GM10248 (cell line): ENCODE measurements at regions of chr12 and their contacts with region 1.

Region 1: DNA sequence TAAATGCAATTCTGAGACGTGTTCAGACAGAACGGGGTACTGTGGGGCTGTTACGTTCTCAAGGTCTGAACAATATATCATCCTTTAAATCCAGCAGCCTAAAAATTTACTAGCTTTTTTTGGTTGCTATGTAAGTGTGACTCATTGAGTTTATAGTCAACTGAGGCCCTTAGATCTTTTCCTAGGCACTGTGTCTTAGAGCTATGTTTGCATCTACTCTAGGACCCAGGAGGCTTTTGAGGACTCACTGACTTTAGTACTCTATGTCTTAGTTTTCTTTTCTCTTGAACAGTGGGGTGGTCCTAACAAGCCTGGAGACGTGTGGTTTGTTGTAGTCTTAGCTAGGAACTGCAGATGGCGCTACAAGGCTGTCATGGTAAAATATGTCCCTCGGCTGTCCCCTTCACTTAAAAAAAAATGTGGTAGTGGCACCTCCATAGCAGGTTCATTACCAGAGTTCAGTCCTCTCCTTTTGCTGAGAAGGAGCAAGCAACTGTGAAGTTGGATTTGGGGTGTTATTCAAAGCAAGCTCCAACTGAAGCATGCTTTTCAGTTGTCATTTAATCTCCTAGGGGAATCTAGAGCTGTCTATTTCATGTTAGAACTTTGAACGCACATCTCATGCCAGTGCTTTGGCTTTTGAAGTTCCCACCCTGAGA is 8.7 kb upstream of the SPATS2 start:
- DNase-seq: peak; percentile 70
- CTCF ChIP-seq: peak; percentile 69

Region 2: DNA sequence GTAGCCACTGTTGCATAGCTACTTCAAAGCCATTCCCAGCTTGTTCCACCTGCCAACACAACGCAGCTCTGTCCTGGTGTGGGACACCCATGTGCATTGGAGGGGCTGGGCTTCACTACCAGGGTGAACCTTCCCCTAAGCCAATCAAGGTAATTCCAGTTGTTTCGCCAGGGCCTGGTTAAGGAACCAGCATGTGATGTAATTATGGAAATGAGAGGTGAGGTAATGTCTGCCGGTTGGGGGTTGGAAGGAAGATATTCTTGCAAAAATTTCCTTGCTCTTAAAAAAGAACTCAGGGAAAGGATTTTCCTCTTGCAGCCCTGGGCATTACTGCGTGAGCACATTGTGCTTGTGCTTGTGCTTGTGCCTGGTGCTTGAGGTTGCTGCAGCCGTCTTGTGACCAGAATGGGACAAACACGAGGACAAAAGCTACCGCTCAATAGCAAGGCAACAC is 78.9 kb before region 1 on chr12:
- CTCF ChIA-PET with region 1: interaction called, 239 read pairs
- POLR2A ChIA-PET with region 1: no interaction called
- DNase-seq: no peak
- CTCF ChIP-seq: no peak

Region 3: DNA sequence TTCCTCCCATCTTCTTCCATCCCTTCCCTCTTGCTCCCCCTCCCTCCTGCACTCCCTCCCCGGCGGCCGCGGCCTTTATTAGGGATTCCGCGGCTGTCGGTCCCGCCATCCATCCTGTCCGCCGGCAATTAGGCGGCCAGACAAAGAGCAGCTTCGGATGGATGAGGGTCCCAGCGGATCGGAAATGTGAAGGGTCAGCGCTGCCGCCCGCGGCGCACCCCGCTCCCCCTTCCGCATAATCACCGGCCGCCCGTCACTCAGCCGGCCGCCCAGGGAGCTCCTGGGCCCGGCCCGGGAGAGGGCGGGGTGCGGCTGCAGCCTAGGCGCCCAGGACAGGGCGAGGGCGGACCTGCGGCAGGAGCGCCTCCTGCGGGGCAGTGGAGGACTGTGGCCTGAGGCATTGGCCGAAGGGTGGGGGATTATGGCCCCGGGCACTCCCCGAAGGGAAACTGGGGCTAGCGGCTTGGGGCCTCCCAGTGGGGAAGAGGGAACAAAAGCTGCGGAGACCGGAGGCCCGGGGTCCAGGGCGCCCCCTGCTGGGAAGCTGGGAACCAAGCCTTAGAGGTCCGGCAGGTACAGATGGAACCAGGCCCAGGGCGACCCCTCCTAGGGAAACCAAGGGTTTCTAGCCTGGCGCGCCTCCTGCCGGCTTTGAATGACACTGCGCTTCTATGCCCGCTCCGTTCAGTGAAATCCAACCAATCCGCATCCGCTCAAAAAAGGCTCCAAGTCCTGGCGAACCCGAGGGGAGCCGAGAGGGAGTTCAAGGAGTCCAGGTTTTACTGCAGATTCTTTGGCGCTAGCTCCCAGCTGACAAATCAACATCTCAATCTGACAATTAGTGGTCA is 16.3 kb before region 1 on chr12:
- CTCF ChIA-PET with region 1: interaction called, 129 read pairs
- POLR2A ChIA-PET with region 1: no interaction called
- DNase-seq: peak; percentile 87
- CTCF ChIP-seq: peak; percentile 81

Region 4: DNA sequence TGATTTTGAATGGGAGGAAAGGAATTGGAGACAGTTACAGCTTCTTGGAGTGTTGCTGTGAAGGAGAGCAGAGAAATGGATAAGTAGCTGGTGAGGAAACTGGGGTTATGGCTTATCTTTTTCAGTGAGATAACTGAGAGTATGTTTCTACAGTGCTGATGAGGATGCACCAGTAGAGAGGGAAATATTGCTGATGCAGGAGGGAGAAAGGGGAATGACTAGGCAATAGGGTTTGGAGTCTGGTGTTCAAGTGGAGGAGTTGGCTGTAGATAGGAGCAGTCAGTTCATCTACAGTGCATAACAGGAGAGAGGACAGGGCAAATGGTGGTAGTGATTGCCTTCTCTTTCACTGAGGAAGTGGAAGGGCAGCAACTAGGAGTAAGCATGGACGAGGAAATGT is 41.7 kb after region 1 on chr12:
- CTCF ChIA-PET with region 1: interaction called, 14 read pairs
- POLR2A ChIA-PET with region 1: no interaction called
- DNase-seq: no peak
- CTCF ChIP-seq: no peak

Region 5: GRCh38 chr12:49503674-49504180 is 145.1 kb after region 1 on chr12:
- CTCF ChIA-PET with region 1: interaction called, 55 read pairs
- POLR2A ChIA-PET with region 1: no interaction called
- DNase-seq: no peak
- CTCF ChIP-seq: no peak

Region 6: DNA sequence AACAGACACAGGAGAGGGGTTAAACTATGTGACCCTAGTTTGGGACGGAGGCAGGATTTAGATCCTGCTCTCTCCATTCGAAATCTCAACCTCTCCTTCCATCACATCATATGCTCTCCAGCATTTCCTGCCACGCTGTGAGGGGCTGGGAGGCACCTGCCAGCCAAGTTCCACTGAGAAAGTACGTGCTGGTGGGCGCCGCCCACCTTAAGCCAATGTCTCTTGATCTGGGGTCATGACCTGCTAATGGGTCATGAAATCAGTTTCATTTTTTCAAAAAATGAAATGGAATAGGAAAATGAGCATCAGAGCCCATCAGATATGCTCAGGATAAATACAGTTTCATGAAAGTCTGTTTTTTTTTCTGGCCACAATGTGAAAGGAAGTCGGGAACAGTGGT is 202.1 kb after region 1 on chr12:
- CTCF ChIA-PET with region 1: interaction called, 11 read pairs
- POLR2A ChIA-PET with region 1: no interaction called
- DNase-seq: no peak
- CTCF ChIP-seq: no peak

Region 7: DNA sequence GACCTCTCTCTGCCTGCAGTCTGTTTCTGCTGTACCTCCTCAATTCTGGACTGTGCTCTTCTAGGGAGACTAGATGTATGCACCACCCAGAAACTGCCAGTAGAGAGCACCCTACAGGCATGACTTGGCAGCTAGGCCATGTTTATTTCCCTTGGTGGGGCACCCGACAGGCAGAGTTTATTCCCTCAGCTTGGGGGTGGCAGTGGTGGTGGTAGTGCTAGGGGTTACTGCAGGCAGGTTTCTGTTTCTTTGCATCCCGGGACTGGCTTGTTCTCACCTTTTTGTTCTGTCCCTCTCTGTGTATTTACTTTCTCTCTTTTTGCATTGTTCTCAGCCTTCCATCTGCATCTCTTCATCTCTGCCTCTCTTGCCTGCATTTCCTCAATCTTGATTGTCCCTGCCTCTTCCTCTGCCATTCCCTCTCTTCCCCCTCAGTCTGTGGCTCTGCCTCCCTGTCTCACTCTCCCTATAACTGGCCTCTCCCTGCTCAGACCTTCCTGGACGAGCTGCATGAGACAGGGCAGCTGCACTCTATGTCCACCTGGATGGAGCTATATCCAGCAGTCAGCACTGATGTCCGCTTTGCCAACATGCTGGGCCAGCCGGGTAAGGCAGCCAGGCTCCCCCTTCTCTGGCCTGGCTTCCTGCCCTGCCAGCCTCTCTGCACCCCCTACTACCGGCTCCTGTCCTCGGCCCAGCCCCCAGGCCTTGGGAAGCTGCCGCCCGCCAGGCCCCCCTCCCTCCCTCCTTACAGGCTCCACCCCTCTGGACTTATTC is 278.6 kb after region 1 on chr12:
- CTCF ChIA-PET with region 1: interaction called, 13 read pairs
- POLR2A ChIA-PET with region 1: no interaction called
- DNase-seq: peak; percentile 82
- CTCF ChIP-seq: peak; percentile 73